ENCODE measurements at regions of chr4 and their contacts with region 1.

Region 1: DNA sequence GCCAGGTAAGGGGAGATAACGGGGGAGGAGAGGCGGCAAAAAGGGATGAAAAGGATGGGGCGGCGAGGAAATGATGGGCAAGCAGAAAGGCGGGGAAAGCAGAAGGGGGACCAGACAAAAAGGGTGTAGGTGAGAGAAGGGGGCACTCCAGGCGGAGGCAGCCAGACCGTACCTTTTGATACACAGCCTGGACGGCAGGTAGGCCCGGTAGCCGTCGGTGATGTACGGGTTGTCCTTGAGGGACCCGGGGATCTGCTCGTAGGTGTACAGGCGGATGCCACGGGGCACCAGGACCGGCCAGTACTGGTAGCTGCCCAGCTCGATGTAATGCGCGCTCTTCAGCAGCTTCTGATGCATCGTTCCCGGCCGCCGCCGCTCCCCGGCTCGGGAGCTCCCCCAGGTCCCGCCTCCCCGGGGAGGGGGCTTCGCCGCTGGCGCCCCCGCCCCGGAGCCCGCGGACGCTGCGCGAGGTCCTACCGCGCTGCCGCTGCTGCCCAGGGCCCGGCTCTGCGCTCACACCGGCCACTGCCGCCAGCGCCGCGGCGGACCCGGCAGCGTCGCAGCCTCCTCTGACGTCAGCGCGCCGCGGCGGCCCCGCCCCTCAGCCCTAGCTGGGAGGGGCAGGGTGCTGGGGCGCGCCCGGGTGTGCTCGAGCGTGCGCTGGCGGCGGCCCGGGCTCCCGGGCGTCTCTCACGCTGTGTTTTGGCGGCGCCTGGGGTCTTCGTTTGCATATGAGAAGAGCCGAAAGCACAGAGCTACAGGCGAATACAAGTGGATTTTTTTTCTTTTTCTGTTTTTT is at the start of gene PAQR3:
- DNase-seq: peak; percentile 82
- H3K4me3 Mint-ChIP-seq: peak within 1 kb of the TSS; percentile 92
- H3K27ac Mint-ChIP-seq: peak within 1 kb of the TSS; percentile 50
- H3K4me1 Mint-ChIP-seq: peaks cover 28% of the 10 kb centered on the region
- H3K27me3 Mint-ChIP-seq: peaks cover 2% of the 10 kb centered on the region
- total RNA-seq, gene PAQR3: 12.4 to 13.9 TPM

Region 2: DNA sequence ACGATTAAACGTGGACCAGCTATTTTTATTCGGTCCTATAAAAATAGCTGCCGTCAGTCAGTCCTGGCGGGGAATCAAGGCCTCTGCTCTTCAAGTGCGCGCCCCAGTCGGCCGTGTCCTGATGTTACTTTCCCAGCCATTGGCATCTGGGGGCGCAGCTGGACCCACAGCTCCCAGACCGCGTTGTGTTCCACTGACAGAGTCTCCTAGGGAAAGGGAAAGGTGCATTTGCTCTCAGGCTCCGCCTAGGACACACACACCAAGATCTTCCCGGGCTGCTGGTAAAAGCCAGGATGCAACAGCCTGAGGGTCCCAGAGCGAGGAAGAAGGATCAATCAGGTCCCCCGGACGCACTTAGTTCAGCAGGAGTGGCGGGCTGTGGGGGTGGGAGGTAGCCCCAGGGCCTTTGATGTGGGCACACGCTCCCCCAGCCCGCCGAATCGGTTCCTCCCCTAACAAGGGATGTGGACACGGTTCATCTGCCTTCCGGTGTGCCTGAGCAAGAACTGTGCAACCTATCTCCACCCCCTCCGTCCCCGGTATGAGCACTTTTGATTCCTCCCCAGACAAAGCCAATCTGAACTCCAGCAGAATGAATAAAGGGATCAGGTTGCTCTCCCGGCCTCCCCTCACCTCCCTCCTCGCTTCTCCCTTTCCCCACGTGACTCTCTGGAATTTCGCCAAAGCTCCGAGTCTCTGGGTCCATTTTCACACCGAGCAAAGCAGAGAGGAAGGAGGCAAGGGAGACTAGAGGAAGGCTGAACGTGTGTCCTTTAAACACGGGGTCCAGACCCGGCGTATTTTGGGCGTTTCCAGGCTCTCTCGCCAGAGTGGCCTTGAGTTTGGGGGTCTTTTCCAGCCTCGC is 882.6 kb before region 1 on chr4:
- CTCF ChIA-PET with region 1: no interaction called
- intact Hi-C with region 1: loop called (anchors 1 kb)
- DNase-seq: peak; percentile 50
- H3K4me3 Mint-ChIP-seq: peak overlapping the region; percentile 65
- H3K27ac Mint-ChIP-seq: no peak overlapping the region
- H3K4me1 Mint-ChIP-seq: peaks cover 21% of the 10 kb centered on the region
- H3K27me3 Mint-ChIP-seq: peaks cover 41% of the 10 kb centered on the region

Region 3: DNA sequence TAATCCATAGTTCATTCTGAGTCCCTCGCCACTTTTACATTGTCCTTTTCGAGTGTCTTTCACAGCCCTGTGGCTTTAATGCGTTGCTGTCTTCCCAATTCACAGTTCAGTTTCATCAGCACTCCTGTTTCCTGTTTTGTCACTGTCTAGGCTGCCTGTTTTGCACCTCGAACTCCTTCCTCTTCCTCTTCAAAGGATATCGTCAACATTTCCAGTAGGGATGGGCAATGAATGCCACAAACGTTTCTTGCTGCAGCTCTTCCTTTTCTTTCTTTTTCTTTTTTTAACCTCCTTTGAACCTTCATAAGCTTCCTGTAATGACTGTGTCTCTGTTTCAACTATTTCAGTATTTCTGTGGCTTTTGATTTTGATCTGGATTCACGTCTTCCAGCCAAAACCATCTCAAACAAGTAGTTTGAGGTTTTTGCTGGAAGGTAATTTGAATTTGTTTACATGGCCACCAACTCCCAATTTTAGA is 282.1 kb before region 1 on chr4:
- CTCF ChIA-PET with region 1: interaction called, 4 read pairs
- intact Hi-C with region 1: loop called (anchors 2 kb)
- DNase-seq: peak; percentile 45
- H3K4me3 Mint-ChIP-seq: peak overlapping the region; percentile 32
- H3K27ac Mint-ChIP-seq: peak overlapping the region; percentile 84
- H3K4me1 Mint-ChIP-seq: peaks cover 45% of the 10 kb centered on the region
- H3K27me3 Mint-ChIP-seq: no peaks in the 10 kb centered on the region

Region 4: GRCh38 chr4:78818530-78819079 is 120.5 kb before region 1 on chr4:
- CTCF ChIA-PET with region 1: no interaction called
- intact Hi-C with region 1: no loop called
- DNase-seq: no peak
- H3K4me3 Mint-ChIP-seq: no peak overlapping the region
- H3K27ac Mint-ChIP-seq: no peak overlapping the region
- H3K4me1 Mint-ChIP-seq: peaks cover 8% of the 10 kb centered on the region
- H3K27me3 Mint-ChIP-seq: no peaks in the 10 kb centered on the region

Region 5: GRCh38 chr4:78951862-78952472 is 12.9 kb after region 1 on chr4:
- CTCF ChIA-PET with region 1: interaction called, 12 read pairs
- intact Hi-C with region 1: no loop called
- DNase-seq: peak; percentile 50
- H3K4me3 Mint-ChIP-seq: no peak overlapping the region
- H3K27ac Mint-ChIP-seq: no peak overlapping the region
- H3K4me1 Mint-ChIP-seq: no peaks in the 10 kb centered on the region
- H3K27me3 Mint-ChIP-seq: peaks cover 12% of the 10 kb centered on the region

Region 6: GRCh38 chr4:80058740-80059139 is 1119.7 kb after region 1 on chr4:
- CTCF ChIA-PET with region 1: no interaction called
- intact Hi-C with region 1: loop called (anchors 5 kb)
- DNase-seq: peak; percentile 67
- H3K4me3 Mint-ChIP-seq: peak overlapping the region; percentile 71
- H3K27ac Mint-ChIP-seq: peak overlapping the region; percentile 86
- H3K4me1 Mint-ChIP-seq: peaks cover 42% of the 10 kb centered on the region
- H3K27me3 Mint-ChIP-seq: no peaks in the 10 kb centered on the region

Region 7: GRCh38 chr4:80202190-80202711 is 1263.2 kb after region 1 on chr4:
- CTCF ChIA-PET with region 1: no interaction called
- intact Hi-C with region 1: loop called (anchors 5 kb)
- DNase-seq: peak; percentile 79
- H3K4me3 Mint-ChIP-seq: peak overlapping the region; percentile 70
- H3K27ac Mint-ChIP-seq: no peak overlapping the region
- H3K4me1 Mint-ChIP-seq: peaks cover 20% of the 10 kb centered on the region
- H3K27me3 Mint-ChIP-seq: peaks cover 20% of the 10 kb centered on the region

Measured in activated naive CD4-positive, alpha-beta T cell treated with anti-CD3 and anti-CD28 coated beads for 36 hours (primary cell).